WTC11 (cell line): ENCODE measurements at regions of chr15 and their contacts with region 1.

Region 1: DNA sequence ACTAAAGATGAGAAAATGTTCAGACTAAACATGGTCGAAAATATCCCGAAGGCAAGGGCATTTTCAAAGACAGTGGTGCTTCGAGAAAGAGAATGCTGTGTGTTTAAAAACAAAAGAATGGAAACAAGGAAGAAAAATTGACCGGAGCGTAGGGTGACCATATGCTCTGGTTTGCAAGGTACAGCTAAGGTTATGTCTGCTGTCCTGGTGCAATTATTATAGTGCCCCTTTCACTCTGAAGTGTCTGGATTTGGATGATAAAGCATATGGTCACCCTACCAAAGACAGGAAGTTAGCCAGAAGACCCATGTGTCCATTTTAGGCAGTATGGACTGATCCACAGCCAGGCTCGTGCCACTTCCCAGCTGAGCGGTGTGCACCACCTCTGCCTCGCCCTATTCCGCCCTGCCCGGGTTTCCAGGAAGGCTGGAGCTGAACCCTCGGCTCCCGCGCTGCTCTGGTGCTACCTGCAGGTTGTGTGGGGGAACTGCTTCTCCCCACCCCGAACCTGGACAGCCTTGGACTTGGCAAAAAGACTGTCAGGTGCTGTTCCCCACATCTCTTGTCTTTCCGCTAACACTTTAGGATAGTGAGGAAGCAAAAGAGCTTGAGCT is 25.2 kb downstream of the GOLGA6D start:
- DNase-seq: peak; percentile 90
- ATAC-seq: peak; percentile 100
- H3K4me3 Mint-ChIP-seq: no peak overlapping the region
- H3K27ac Mint-ChIP-seq: no peak overlapping the region
- H3K4me1 Mint-ChIP-seq: 0 out of 2 replicates have a peak, but pooled peaks cover 4% of the 10 kb centered on the region
- H3K27me3 Mint-ChIP-seq: peaks cover 20% of the 10 kb centered on the region
- CTCF ChIP-seq: peak; percentile 65

Region 2: DNA sequence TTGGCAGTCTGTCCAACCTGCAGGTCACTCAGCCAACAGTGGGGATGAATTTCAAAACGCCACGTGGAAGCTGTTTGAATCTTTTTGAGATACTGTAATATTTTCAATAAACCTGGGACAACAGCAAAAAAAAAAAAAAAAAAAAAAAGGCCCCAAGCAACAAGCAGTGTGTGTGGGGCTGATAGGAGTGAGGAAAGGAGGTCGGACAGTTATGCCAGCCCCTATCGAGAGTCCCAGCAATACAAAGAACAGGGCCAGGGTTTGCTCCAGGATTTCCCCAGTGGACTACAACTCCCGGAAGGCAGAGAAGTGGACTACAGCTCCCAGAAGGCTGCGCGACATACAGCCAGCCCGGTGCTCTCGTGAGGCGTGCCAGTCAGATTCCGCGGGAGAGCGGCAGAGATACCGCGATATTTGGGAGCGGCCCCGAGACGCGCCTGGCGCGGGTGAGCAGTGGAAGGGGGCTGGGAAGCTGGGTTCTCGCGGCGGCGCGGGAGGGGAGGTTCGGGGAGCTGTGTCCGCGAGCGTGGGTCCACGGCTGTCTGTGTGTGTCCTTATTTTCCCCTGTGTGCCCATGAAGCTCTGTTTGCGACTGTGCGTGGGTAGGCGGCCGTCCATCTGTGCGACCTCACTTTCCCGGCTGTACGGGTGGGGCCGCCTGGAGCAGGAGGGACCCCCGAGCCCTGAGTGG is 284.6 kb before region 1 on chr15 and contains the start of gene PPCDC:
- CTCF ChIA-PET with region 1: interaction called, 25 read pairs
- POLR2A ChIA-PET with region 1: no interaction called
- DNase-seq: peak; percentile 97
- ATAC-seq: peak; percentile 99
- H3K4me3 Mint-ChIP-seq: peak within 1 kb of the TSS; percentile 96
- H3K27ac Mint-ChIP-seq: peak within 1 kb of the TSS; percentile 84
- H3K4me1 Mint-ChIP-seq: peaks cover 17% of the 10 kb centered on the region
- H3K27me3 Mint-ChIP-seq: no peaks in the 10 kb centered on the region
- CTCF ChIP-seq: no peak
- total RNA-seq, gene PPCDC: 25.7 to 30.1 TPM (median 27.8 TPM) in 3 replicates

Region 3: DNA sequence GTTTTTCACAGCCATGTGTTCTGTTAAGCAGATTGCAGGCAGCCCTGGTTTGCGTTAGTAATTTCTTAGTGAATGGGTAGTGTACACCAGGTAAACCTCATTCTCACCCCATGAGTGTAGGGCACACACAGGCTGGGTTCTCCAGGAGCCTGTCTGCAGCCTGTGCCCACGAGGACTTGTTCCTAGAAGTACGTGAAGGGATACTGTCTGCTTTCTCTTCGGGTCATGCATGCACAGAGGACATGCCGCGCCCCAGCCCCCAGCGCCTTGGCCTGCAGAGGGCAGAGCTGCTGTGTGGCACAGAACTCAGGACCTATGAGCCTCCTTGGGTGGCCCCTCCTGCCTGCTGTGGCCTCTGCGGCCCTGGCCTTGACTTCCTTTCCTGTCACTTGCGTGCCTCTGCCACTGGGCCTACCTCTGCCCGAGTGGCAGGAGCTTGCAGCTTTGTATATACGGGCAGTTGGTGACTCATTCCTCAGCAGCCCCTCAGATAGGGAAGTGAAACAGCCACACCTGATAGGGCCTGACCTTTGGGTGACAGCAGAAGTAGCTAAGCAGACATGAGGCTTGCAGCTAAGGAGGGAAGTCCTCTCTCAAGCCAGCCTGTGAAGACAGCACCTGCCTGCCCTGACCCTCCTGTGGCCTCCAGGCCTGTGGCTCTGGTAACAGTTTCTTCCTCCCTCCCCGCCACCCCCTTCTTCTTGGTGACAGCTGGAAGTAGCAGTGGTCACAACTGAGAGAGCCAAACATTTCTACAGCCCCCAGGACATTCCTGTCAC is 265.0 kb before region 1 on chr15:
- CTCF ChIA-PET with region 1: interaction called, 15 read pairs
- POLR2A ChIA-PET with region 1: no interaction called
- DNase-seq: peak; percentile 66
- ATAC-seq: peak; percentile 85
- H3K4me3 Mint-ChIP-seq: no peak overlapping the region
- H3K27ac Mint-ChIP-seq: no peak overlapping the region
- H3K4me1 Mint-ChIP-seq: peaks cover 7% of the 10 kb centered on the region; the same call in 1 of the 2 replicates
- H3K27me3 Mint-ChIP-seq: no peaks in the 10 kb centered on the region
- CTCF ChIP-seq: 0 out of 2 replicates have a peak, but pooled peaks have one; percentile 12

Region 4: DNA sequence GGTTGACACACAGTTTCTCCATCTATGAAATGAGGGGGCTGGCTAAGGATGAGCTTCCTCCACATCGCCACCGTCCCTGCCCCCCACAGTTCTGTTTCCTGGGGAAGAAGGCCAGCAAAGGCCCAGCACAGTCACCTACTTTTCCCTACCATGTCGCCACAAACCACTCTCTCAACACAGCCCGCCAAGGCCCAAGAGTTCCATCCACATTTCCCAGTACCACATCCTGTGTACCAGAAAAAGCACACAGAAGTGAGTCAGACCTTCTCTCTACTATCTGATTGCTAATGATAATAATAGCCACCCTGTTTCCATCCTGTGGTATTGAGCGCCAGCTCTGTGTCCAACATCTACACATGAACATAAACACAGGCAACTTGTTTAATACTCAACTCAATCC is 136.5 kb before region 1 on chr15:
- CTCF ChIA-PET with region 1: no interaction called
- POLR2A ChIA-PET with region 1: no interaction called
- DNase-seq: no peak
- ATAC-seq: no peak
- H3K4me3 Mint-ChIP-seq: no peak overlapping the region
- H3K27ac Mint-ChIP-seq: no peak overlapping the region
- H3K4me1 Mint-ChIP-seq: peaks cover 6% of the 10 kb centered on the region
- H3K27me3 Mint-ChIP-seq: peaks cover 4% of the 10 kb centered on the region
- CTCF ChIP-seq: no peak

Region 5: DNA sequence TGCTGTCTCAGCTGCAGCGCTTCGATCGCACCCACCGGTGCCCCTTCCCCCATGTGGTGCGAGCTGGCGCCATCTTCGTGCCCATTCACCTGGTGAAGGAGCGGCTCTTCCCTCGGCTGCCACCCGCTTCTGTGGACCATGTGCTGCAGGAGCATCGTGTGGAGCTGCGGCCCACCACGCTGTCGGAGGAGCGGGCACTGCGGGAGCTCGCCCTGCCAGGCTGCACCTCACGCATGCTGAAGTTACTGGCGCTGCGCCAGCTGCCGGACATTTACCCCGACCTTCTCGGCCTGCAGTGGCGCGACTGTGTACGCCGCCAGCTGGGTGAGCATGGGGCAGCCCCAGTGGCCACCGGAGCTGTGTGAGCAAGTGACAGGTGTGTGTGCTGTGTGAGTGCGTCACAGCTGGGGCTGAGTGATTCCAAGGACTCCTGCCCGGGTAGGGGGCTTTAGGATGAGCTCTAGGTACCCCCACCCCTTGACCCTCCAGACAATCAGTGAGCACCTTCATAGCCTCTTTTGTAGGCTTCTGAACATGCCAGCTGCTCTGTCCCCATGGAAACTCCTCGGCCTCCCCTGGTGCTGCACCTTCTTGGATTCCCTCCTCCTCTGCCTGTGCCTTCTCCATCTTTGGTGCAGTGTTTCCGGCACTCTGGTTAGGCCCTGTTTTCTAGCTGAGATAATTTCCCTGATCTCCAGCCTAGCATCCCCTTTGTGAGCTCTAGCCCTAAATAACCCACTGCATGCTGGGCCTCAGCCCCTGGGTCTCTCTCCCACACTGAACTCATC is 99.2 kb before region 1 on chr15:
- CTCF ChIA-PET with region 1: interaction called, 23 read pairs
- POLR2A ChIA-PET with region 1: no interaction called
- DNase-seq: no peak
- ATAC-seq: no peak
- H3K4me3 Mint-ChIP-seq: no peak overlapping the region
- H3K27ac Mint-ChIP-seq: peak overlapping the region; percentile 13; the same call in 1 of the 2 replicates
- H3K4me1 Mint-ChIP-seq: peaks cover 21% of the 10 kb centered on the region
- H3K27me3 Mint-ChIP-seq: no peaks in the 10 kb centered on the region
- CTCF ChIP-seq: no peak

Region 6: DNA sequence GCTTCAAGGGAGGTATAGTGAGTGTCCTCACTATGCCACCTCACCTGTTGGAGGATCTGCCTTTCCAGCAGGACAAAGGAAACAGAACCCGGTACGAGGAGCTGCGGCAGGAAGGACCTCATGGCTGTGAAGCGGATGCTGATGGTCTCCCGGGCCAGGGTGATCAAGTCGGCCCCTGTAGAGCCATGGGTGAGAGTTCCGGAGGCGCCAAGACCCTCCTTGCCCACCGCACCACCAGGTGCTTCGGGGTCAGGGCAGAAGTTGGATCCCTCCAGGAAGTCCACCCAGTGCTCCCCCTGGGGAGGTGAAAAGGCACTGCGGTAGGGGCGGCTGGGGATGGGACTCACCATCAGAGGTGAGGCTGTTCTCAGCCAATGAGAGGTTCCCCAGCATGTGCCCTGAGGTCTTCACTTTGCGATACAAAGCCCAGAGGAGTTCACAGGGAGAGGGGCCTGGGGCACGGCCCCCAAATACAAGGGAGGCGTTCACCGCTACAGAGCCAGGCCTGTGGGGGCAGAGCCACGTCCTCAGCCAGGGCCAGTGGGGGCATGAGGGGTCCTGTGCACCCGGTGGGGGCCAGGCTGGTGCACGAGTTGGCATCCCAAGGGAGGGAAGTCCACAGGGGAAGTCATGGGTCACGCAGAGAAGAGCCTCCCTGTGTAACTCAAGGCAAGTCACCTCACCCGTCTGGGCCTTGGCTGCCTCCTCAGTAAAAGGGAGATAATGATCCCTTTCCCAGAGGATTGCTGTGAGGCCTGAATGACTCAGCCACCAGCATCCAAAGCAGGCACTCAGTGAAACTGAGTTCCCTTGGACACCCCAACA is 78.5 kb before region 1 on chr15:
- CTCF ChIA-PET with region 1: interaction called, 17 read pairs
- POLR2A ChIA-PET with region 1: no interaction called
- DNase-seq: no peak
- ATAC-seq: no peak
- H3K4me3 Mint-ChIP-seq: no peak overlapping the region
- H3K27ac Mint-ChIP-seq: no peak overlapping the region
- H3K4me1 Mint-ChIP-seq: peaks cover 11% of the 10 kb centered on the region
- H3K27me3 Mint-ChIP-seq: peaks cover 38% of the 10 kb centered on the region
- CTCF ChIP-seq: no peak